Activated CD4-positive, alpha-beta memory T cell treated with anti-CD3 and anti-CD28 coated beads for 36 hours (primary cell): ENCODE measurements at regions of chr4 and their contacts with region 1.

Region 1: DNA sequence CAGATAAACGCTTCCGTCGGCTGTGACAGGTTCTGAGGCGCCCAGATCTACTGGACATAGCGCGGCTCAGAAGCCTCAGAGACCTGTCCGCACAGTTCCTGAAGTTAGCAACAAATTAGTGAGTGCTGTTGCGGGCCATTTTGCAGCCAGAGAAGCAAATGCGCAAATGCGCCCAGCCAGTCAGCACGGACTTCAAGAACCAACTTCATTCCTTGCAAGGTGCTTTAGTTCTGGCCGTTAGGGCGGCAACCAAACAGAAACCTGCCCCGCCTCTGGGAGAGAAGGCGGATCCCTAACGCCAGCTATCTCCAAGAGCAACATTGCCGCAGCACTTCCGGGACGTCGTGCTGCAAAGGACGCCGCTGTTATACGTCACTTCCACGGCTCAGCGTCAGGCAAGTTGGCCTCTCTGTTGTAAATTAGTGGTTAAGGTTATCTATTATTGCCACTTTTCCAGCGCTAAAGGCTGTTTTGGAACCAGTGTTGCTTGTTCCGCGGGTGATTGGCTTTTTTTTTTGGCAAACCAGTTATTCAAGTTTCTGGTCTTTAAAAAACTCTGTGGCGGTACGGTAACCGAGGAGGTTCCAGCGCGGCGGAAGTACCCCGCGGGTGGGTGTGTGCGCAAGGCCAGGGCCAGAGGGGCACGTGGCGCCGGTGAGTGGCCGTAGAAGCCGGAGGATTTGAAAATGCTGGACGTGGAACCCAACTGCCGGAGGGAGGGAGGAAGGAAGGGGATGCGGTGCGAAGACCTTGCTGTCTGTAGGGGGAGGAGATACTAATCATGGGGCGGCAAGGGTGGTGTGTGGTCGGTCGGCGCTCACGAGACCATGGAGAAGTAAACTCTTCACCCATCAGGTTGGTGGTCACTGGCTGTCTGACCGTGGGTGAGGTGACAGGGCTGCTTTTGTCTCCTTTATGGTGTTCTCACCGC is at the start of gene GAR1:
- DNase-seq: peak; percentile 94
- H3K4me3 Mint-ChIP-seq: peak within 1 kb of the TSS; percentile 99
- H3K27ac Mint-ChIP-seq: peak within 1 kb of the TSS; percentile 96
- H3K4me1 Mint-ChIP-seq: peaks cover 39% of the 10 kb centered on the region
- H3K27me3 Mint-ChIP-seq: no peaks in the 10 kb centered on the region
- total RNA-seq, gene GAR1: 30.5 to 32.8 TPM

Region 2: DNA sequence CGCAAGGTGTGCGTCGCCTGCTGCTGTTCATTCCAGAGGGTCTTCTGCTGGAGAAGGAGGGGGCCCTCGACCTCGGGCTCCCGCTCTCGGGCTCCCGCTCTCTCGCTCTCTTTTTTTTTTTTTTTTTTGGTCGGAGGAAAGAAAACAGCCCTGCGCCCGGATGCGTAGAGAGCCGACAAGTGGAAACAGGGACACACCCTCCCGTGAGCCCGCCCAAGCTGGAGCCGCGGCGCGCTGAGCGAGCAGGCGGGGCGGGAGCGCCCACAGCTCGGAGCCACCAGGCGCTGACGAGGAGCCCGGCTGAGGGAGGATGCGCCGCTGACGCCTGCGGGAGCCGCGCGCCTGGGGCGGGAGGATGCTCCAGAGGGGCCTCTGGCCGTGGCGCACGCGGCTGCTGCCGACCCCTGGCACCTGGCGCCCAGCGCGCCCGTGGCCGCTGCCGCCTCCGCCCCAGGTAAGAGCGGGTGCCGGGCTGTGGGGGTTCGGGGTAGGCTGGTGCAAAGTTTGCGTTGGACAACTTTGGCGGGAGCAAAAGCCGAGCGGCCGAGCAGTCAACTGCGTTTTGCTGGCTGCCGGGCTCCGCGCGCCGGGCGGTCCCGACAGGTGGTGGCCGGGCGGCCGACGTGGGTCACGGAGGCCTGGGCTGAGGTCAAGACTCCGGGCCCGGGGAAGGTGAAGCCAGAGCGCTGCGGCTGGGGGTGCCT is 255.3 kb before region 1 on chr4 and contains the start of gene MCUB:
- CTCF ChIA-PET with region 1: interaction called, 3 read pairs
- POLR2A ChIA-PET with region 1: no interaction called
- intact Hi-C with region 1: loop called (anchors 1 kb)
- DNase-seq: peak; percentile 95
- H3K4me3 Mint-ChIP-seq: peak within 1 kb of the TSS; percentile 84
- H3K27ac Mint-ChIP-seq: peak within 1 kb of the TSS; percentile 92
- H3K4me1 Mint-ChIP-seq: peaks cover 52% of the 10 kb centered on the region
- H3K27me3 Mint-ChIP-seq: no peaks in the 10 kb centered on the region
- total RNA-seq, gene MCUB: 76.7 to 80.5 TPM

Region 3: DNA sequence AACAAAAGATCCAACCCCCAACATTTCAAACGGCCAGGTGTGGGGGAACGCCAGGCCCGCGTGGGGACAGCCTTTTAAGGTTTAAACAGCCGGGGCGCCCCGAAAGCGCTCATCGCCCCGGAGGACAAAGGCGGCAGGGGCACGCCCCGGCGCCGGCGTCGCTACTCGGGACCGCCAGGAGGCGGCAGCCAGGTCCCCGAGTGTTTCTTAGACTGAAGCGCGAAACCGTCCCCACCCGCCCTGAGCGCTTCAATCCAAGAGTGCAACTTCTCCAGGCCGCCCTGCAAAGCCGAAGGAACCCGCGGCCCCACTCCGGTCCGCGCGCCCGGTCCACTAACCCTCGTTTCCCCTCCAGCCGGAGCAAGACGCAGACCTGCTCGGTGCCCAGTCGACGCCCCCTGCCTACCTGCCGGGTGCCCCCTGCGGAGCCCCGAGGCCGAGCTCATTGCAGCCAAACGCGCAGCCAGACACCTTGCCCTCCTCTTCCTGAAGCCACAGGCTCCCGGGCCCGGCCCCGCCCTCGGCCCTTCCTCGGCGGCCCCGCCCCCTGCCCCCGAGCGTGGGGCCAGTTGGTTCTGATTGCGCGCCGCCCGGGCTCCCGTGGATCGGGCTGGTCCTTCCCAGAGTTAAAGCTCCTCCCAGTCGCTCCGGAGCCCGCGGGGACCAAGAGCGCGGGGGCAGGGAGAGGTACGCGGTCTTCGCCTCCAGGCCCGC is 112.3 kb before region 1 on chr4 and contains the start of gene CASP6:
- CTCF ChIA-PET with region 1: interaction called, 5 read pairs
- POLR2A ChIA-PET with region 1: no interaction called
- intact Hi-C with region 1: loop called (anchors 1 kb)
- DNase-seq: peak; percentile 79
- H3K4me3 Mint-ChIP-seq: peak within 1 kb of the TSS; percentile 90
- H3K27ac Mint-ChIP-seq: peak within 1 kb of the TSS; percentile 82
- H3K4me1 Mint-ChIP-seq: peaks cover 34% of the 10 kb centered on the region
- H3K27me3 Mint-ChIP-seq: no peaks in the 10 kb centered on the region
- total RNA-seq, gene CASP6: 18.4 to 29.9 TPM

Region 4: GRCh38 chr4:109947457-109947856 is 132.0 kb after region 1 on chr4:
- CTCF ChIA-PET with region 1: no interaction called
- POLR2A ChIA-PET with region 1: interaction called, 3 read pairs
- intact Hi-C with region 1: loop called (anchors 1 kb)
- DNase-seq: no peak
- H3K4me3 Mint-ChIP-seq: no peak overlapping the region
- H3K27ac Mint-ChIP-seq: peak overlapping the region; percentile 64
- H3K4me1 Mint-ChIP-seq: peaks cover 37% of the 10 kb centered on the region
- H3K27me3 Mint-ChIP-seq: peaks cover 4% of the 10 kb centered on the region

Region 5: GRCh38 chr4:110296892-110297291 is 481.5 kb after region 1 on chr4:
- CTCF ChIA-PET with region 1: interaction called, 3 read pairs
- POLR2A ChIA-PET with region 1: no interaction called
- intact Hi-C with region 1: loop called (anchors 5 kb)
- DNase-seq: no peak
- H3K4me3 Mint-ChIP-seq: no peak overlapping the region
- H3K27ac Mint-ChIP-seq: no peak overlapping the region
- H3K4me1 Mint-ChIP-seq: peaks cover 12% of the 10 kb centered on the region
- H3K27me3 Mint-ChIP-seq: peaks cover 38% of the 10 kb centered on the region